AG04449 (cell line): ENCODE measurements at regions of chr1 and their contacts with region 1.

Region 1: DNA sequence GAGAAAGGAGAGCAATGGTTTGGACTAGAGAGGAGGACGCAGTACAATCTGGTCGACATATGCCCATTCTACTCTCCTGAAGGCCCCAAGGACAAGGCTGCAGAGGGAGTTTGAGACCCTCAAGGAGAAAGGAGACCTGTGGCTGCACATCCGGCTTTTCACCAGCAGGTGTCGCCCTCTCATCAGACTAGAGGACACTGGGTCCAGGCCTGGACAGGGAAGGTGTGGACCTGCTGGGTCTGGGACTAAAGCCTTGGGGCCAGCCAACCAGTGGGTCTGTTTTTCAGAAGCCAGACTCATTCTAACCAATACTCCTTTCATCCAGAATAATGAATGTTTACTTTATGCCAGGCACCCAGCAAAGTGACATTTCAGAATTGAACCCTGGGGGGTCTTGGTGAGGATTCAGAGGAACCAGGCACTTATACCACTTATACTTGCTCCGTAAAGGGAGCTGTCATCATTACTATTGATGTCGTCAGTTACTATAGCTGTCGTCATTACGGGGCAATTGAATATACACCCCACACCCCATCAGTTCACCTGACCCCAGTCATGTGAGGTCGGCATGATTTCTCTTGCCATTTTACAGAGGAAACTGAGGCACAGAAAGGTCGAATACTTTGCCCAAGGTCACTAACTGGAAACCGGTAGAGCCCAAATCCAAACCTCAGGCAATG is 5.1 kb downstream of the SRARP start:
- DNase-seq: no peak
- H3K4me3 ChIP-seq: no peak overlapping the region
- CTCF ChIP-seq: peak; percentile 92

Region 2: GRCh38 chr1:15863156-15863901 is 145.8 kb before region 1 on chr1:
- CTCF ChIA-PET with region 1: no interaction called
- POLR2A ChIA-PET with region 1: no interaction called
- DNase-seq: no peak
- H3K4me3 ChIP-seq: no peak overlapping the region
- CTCF ChIP-seq: no peak

Region 3: DNA sequence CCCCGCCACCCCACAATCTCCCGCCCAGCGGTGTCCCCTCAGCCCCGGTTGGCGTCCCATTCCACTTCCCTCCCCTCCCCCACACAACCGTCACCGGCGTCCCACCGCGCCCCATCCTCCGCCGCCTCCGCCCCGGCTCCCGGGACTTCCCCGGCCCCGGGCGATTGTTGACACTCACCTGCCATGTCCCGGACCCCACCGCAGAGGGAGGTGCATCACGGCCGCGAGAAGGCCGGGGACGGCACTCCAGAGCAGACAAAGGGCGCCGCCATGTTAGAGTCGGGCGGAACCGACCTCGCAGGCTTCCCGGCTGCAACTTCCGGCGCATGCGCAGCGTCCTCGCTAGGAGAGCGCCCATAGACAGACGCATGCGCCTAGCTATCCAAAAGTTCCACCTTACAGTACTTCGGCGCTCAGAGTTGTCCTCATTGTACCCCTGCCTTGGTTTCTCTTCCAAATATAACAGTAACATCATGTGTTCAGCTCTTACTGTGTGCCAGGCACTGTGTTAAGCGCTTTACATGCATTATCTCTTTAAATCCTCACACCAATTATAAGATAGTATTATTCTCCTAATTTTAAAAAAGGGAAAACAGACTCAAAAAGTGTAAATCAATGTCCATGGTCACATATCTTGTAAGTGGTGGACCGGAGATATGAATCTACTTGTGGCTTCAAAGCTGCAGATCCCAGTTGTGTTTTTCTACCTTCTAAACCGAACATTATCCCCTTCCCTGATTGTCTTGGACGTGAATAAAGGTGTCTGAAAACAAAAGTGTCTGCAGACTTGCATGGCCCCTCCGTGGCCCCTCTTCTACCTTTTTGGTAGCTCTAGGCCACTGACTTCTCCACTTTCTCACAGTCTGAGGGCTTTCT is 33.1 kb before region 1 on chr1 and contains the start of gene ZBTB17:
- CTCF ChIA-PET with region 1: interaction called, 10 read pairs
- POLR2A ChIA-PET with region 1: no interaction called
- DNase-seq: no peak
- H3K4me3 ChIP-seq: peak within 1 kb of the TSS; percentile 76
- CTCF ChIP-seq: no peak

Region 4: GRCh38 chr1:15994590-15995351 is 14.4 kb before region 1 on chr1:
- CTCF ChIA-PET with region 1: interaction called, 93 read pairs
- POLR2A ChIA-PET with region 1: no interaction called
- DNase-seq: no peak
- H3K4me3 ChIP-seq: no peak overlapping the region
- CTCF ChIP-seq: peak; percentile 94

Region 5: GRCh38 chr1:16032388-16033103 is 23.4 kb after region 1 on chr1:
- CTCF ChIA-PET with region 1: interaction called, 44 read pairs
- POLR2A ChIA-PET with region 1: no interaction called
- DNase-seq: no peak
- H3K4me3 ChIP-seq: no peak overlapping the region
- CTCF ChIP-seq: peak; percentile 99

Region 6: DNA sequence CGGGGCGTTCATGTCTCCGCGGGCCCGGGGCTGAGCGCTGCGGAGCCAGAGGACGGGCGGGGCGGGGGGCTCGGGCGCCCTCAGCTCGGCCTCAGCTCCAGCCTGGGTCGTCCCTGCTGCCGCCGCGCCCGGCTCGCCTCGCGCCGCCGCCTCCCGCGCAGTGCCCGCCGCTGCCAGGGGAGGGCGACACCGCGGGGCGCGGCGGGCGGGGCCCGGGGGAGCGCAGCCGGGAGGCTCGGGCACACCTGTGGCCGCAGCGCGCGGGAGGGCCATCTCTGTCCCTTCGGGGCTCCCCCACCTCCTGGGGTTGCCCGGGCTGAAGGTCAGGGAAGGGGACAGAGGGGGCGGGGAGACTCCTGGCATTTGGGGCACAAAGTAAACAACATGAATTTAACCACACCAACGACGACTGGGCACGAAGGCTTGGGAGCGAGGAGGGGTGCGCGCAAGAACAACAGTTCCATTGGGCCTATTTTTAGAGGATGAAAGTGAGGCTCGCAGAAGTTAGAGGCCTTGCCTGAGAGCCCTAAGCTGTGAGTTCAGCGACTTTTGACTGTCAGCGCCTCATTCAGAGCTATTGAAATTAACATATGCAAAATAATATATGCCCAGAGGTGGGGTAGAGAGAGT is 64.4 kb after region 1 on chr1 and contains the start of gene FAM131C:
- CTCF ChIA-PET with region 1: interaction called, 141 read pairs
- POLR2A ChIA-PET with region 1: no interaction called
- DNase-seq: no peak
- H3K4me3 ChIP-seq: peak within 1 kb of the TSS; percentile 52
- CTCF ChIP-seq: peak; percentile 27